ENCODE measurements at regions of chr2 and their contacts with region 1.

Region 1: GRCh38 chr2:172833898-172834297 is 98.3 kb downstream of the RAPGEF4 start:
- DNase-seq: no peak
- ATAC-seq: no peak
- H3K4me3 Mint-ChIP-seq: no peak overlapping the region
- H3K27ac Mint-ChIP-seq: no peak overlapping the region
- H3K4me1 Mint-ChIP-seq: peaks cover 5% of the 10 kb centered on the region
- H3K27me3 Mint-ChIP-seq: peaks cover 10% of the 10 kb centered on the region
- CTCF ChIP-seq: no peak

Region 2: GRCh38 chr2:172753610-172754009 is 80.3 kb before region 1 on chr2:
- CTCF ChIA-PET with region 1: no interaction called
- POLR2A ChIA-PET with region 1: no interaction called
- intact Hi-C with region 1: no loop called
- DNase-seq: no peak
- ATAC-seq: no peak
- H3K4me3 Mint-ChIP-seq: no peak overlapping the region
- H3K27ac Mint-ChIP-seq: no peak overlapping the region
- H3K4me1 Mint-ChIP-seq: no peaks in the 10 kb centered on the region
- H3K27me3 Mint-ChIP-seq: no peaks in the 10 kb centered on the region
- CTCF ChIP-seq: no peak

Region 3: DNA sequence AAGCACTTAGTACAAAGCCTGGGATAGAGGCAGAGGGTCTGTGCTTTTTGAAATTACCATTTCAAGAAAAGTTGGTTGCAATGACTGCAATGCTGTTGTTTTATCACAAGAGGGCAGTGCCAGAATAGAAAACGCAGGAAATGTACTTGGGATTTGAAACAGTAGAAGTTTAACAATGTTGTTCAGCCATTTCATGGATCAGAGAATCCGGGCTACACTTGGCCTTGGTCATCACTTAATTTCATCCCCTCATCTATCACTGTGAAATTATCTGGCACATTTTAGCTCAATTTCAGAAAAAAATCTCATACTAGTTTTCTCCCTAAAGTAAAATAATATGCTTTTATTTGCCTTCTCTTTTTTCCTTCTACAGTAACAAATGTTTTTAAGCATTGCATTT is 27.4 kb before region 1 on chr2:
- CTCF ChIA-PET with region 1: interaction called, 10 read pairs
- POLR2A ChIA-PET with region 1: no interaction called
- intact Hi-C with region 1: no loop called
- DNase-seq: no peak
- ATAC-seq: no peak
- H3K4me3 Mint-ChIP-seq: no peak overlapping the region
- H3K27ac Mint-ChIP-seq: no peak overlapping the region
- H3K4me1 Mint-ChIP-seq: no peaks in the 10 kb centered on the region
- H3K27me3 Mint-ChIP-seq: no peaks in the 10 kb centered on the region
- CTCF ChIP-seq: peak; percentile 79

Region 4: GRCh38 chr2:172845028-172845630 is 11.2 kb after region 1 on chr2:
- CTCF ChIA-PET with region 1: no interaction called
- POLR2A ChIA-PET with region 1: no interaction called
- intact Hi-C with region 1: no loop called
- DNase-seq: no peak
- ATAC-seq: no peak
- H3K4me3 Mint-ChIP-seq: no peak overlapping the region
- H3K27ac Mint-ChIP-seq: no peak overlapping the region
- H3K4me1 Mint-ChIP-seq: no peaks in the 10 kb centered on the region
- H3K27me3 Mint-ChIP-seq: no peaks in the 10 kb centered on the region
- CTCF ChIP-seq: no peak